ENCODE measurements at regions of chr2 and their contacts with region 1.

Region 1: DNA sequence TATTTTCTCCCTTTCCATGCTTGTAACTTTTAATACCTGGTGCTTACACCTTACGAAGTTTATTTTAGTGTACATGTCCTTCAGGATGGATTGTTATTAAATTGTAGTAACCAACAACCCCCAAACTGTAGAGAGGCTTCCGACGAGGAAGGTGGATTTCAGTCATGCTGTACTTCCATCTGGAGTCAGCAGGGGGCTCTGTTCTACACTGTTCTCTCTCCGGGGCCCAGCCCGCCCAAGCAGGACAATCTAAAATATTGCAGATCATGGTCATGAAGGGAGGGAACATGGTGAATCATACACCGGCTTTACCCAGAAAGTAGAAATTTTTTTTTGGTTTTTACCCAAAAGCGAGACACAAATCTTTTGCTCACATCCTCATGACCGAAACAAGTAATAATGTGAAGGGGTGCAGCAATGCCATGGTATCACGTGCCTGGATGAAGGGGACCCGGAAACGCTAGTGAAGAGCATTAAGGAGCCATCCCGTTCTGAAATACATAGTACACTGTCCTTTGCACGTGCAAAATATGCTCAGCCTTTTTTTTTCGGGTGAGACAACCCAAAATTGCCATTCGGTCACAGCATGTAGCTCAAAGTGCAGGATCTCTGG is 884.8 kb downstream of the EPHA4 start:
- DNase-seq: peak; percentile 46
- CTCF ChIP-seq: peak; percentile 68

Region 2: GRCh38 chr2:219772095-219772635 is 915.2 kb before region 1 on chr2:
- in situ Hi-C with region 1: no loop called
- DNase-seq: no peak
- CTCF ChIP-seq: no peak

Region 3: DNA sequence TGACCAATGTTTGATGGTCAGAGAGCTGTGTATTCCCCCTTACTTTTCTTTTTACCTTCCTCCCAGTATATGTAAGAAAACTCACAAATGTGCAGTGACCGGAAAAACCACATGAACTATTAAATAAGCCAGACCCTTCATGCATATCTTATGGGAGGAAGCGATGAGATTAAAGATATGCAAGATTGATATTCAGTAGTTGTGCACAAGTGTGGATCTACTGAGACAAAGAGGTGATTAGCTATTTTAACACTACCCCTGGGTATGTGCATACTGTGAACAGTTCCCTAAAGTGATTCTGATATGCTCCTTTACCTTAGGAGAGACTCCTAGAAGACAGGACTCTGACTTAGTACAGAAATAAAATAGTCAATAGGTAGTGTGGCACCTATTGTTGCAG is 556.4 kb after region 1 on chr2:
- in situ Hi-C with region 1: no loop called
- DNase-seq: no peak
- CTCF ChIP-seq: no peak

Region 4: DNA sequence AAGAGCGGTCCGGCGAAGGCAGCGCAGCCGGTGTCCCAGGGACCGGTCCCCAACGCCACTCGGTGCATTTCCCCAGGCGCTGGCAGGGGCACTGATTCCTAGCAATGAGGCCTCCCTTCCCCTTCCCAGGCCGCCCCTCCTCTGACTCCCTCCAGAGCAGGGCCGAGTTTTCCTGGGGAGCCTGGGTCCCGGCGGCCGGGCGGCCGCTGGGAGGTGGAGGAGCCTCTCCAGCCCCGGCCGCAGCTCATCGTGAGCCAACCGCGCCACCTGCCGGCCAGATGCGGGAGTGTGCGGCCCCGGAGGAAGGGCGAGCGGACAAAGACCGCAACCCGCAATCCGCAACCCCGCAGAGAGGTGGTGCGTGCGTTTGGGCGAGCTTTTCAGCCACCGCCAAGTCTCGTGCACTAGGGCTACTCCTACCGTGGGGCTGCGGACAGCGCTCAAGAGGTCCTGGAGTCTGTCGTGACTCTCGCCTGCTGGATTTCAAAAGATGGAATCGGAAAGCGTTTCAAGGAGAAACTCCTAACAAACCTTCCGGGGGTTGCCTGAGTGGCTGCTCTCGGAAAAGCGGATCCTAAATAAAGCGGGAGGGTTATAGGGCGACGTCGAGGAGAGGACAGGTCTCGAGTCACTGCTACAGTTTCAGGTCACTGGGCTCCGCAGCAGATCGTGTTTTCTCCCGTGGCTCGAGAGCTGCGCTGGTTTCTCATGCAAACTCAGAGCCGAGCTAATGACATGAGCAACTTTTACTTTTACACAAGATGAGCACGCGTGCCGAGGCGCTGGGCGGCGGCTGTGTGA is 886.3 kb after region 1 on chr2:
- in situ Hi-C with region 1: loop called (anchors 25 kb)
- DNase-seq: peak; percentile 88
- CTCF ChIP-seq: peak; percentile 96

Region 5: DNA sequence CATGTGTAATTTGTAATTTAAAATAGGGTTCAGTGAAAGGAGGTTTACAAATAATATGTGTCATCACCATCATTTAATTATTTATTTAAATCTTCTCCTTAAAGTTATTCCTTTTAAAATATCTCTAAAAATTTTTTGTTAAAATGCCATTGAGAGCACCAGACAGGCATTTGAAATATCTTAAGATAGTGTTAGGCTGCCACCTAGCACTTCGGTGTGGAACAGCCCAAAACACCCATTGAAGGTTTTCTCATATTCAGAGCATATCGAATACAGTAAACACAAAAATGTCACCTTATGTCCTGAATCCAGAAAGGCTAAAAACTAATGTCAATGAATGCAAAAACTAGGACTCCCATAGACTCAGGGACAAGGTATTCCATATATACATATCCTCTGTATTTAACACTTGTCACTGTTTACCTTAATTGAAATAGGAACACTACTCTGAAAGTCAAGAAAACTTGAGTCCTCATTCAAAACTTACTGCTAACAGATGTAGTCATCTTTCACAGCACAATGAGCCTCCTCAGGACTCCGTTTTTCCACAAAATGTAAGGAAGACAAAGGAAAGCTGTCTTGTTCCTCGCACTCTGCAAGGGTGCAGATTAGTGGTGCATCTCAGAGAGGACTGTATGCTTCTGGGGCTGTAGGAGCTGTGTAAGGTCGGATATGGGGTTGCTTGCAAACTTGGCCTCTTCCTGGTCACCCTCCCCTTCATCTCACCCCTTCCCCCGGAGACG is 1281.9 kb after region 1 on chr2:
- in situ Hi-C with region 1: loop called (anchors 25 kb)
- DNase-seq: peak; percentile 34
- CTCF ChIP-seq: no peak